Sciatic nerve (tissue), 2 donors: ENCODE measurements at regions of chr9 and their contacts with region 1.

Region 1: GRCh38 chr9:112556497-112557085 is 70.0 kb downstream of the KIAA1958 start:
- DNase-seq: no peak
- ATAC-seq: no peak

Region 2: GRCh38 chr9:110900917-110901316 is 1655.7 kb before region 1 on chr9:
- intact Hi-C with region 1: loop called (anchors 5 kb)
- DNase-seq: no peak
- ATAC-seq: no peak